ENCODE measurements at regions of chr3 and their contacts with region 1.

Region 1: DNA sequence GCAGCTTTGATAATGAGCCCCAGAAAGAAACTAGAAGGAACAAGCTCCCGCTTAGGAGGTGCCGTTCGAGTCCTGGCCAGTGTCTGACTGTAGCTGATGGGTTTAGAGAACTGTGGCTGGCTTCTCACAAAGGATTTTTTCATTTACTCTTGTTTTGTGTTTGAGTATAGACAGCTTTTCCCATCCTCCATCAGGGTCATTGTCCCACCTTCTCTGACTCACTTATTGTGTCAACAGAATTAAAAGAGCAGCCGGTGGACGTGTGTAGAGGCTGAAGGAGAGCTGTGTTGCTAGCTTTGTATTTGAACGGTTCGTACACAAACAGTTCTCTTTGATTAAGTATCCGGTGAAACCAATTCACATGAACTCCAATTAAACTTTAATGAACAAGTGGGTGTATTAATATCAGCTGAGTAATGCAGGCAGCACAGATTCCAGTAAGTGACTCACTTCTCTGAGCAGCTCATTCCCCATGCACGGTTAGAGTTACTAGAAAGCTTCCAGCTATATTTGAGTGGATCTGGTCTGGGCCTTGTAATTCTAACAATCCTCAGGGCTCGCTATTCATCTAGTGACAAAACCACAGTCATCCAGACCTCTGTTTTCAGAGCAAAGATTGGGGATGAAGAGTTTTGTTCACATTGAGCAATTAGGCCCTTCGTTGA is 141.0 kb downstream of the LPP start:
- DNase-seq: peak; percentile 29
- ATAC-seq: peak; percentile 37
- H3K4me3 Mint-ChIP-seq: no peak overlapping the region
- H3K27ac Mint-ChIP-seq: peak overlapping the region; percentile 69
- H3K4me1 Mint-ChIP-seq: peaks cover 74% of the 10 kb centered on the region
- H3K27me3 Mint-ChIP-seq: no peaks in the 10 kb centered on the region

Region 2: GRCh38 chr3:187802928-187803259 is 492.1 kb before region 1 on chr3:
- CTCF ChIA-PET with region 1: interaction called, 3 read pairs
- POLR2A ChIA-PET with region 1: interaction called, 5 read pairs
- intact Hi-C with region 1: loop called in 1 of 2 experiments (anchors 1 kb)
- DNase-seq: peak; percentile 86
- ATAC-seq: peak; percentile 60
- H3K4me3 Mint-ChIP-seq: peak overlapping the region; percentile 34
- H3K27ac Mint-ChIP-seq: peak overlapping the region; percentile 81
- H3K4me1 Mint-ChIP-seq: peaks cover 93% of the 10 kb centered on the region
- H3K27me3 Mint-ChIP-seq: no peaks in the 10 kb centered on the region

Region 3: DNA sequence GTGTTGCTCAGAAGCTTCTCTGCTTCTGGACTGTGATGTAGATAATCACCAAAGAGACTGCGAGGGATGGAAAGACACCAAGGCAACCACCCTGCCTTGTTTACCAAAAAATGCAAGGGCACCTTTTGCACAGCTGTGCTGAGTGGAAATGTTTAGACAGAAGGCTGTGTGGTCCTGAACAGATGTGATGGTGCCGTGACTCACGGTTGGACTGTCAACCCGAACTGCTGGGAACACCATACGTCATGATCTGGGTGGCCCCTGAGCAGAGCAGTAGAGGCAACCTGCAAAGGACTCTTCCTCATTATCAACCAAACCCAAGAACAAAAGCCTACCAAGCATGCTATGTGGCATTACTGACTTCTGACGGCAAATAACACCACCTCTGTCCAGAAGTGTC is 202.3 kb before region 1 on chr3:
- CTCF ChIA-PET with region 1: no interaction called
- POLR2A ChIA-PET with region 1: no interaction called
- intact Hi-C with region 1: no loop called
- DNase-seq: peak; percentile 80
- ATAC-seq: peak; percentile 97
- H3K4me3 Mint-ChIP-seq: no peak overlapping the region
- H3K27ac Mint-ChIP-seq: no peak overlapping the region
- H3K4me1 Mint-ChIP-seq: peaks cover 7% of the 10 kb centered on the region
- H3K27me3 Mint-ChIP-seq: no peaks in the 10 kb centered on the region

Region 4: GRCh38 chr3:188170461-188171459 is 124.2 kb before region 1 on chr3:
- CTCF ChIA-PET with region 1: no interaction called
- POLR2A ChIA-PET with region 1: no interaction called
- intact Hi-C with region 1: loop called in 1 of 2 experiments (anchors 5 kb)
- DNase-seq: peak; percentile 82
- ATAC-seq: peak; percentile 91
- H3K4me3 Mint-ChIP-seq: peak overlapping the region; percentile 20
- H3K27ac Mint-ChIP-seq: peak overlapping the region; percentile 88
- H3K4me1 Mint-ChIP-seq: peaks cover 59% of the 10 kb centered on the region
- H3K27me3 Mint-ChIP-seq: no peaks in the 10 kb centered on the region

Region 5: DNA sequence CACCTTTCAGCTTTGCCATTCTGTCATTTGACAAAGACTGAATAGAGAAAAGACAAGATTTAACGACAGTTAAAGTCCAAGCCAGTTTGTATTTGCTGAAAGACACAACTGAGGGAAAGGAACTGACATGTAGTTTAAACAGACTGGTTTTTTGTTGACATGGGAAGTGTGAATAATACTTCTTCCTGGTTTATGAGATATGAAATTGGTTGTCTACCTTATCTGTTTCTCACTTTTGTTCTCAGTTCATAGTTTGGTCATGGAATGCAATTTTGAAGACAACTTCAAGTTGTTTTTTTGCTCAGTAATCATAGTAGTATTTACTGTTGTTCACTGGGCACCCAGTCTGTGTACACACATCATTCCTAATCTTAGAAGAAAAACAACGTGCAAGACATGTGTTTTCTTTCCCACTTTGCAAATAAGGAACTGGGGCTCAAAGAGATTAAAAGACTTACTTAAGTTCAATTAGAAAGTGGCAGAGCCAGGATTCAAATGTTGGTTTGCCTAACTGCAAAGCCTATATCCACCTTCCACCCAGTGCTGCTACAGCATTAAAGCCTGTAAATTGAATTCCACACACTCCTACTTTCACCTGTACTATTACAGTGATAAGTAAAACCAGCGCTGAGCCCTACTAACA is 37.5 kb before region 1 on chr3:
- CTCF ChIA-PET with region 1: no interaction called
- POLR2A ChIA-PET with region 1: interaction called, 5 read pairs
- intact Hi-C with region 1: loop called in 1 of 2 experiments (anchors 2 kb)
- DNase-seq: no peak
- ATAC-seq: peak; percentile 12
- H3K4me3 Mint-ChIP-seq: no peak overlapping the region
- H3K27ac Mint-ChIP-seq: peak overlapping the region; percentile 62
- H3K4me1 Mint-ChIP-seq: peaks cover 46% of the 10 kb centered on the region
- H3K27me3 Mint-ChIP-seq: no peaks in the 10 kb centered on the region

Region 6: DNA sequence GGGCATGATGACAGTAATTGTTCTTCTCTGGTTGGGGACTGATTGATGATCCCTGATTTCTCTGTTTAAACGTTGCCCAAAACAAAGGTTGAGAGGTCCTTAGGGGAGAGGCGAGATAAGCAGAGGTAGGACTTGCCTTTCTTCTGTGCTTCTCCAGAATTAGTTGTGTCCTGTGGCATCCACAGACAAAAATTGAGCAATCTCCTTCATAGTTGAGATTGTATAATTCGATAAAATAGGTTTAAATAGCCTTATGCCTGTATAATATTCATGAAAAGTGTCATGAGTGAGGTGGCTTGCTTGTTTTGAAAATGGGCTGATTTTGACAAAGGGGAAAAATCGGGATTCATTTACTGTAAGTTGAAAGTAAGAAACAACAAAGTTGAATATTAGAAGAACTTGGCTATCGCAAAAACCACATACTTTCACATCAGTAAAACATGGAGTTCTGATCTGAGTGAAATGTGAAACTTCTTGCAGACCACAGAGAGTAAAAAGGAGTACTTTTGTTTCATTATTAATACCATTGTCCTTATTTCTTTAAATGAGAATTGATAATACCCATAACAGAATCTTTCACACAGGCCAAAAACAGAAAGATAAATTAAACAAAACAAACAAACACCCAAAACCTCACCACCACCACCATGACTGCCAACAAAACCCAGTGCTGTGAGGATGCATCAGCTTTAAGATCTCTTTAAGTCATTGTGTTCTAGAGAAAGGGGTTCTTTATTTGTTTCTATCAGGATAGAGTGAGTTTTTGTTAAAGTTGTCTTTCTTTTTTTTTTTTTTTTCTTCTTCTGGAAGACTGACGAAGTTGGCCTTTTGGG is 14.7 kb after region 1 on chr3:
- CTCF ChIA-PET with region 1: interaction called, 7 read pairs
- POLR2A ChIA-PET with region 1: interaction called, 4 read pairs
- intact Hi-C with region 1: loop called (anchors 1 kb)
- DNase-seq: peak; percentile 50
- ATAC-seq: peak; percentile 85
- H3K4me3 Mint-ChIP-seq: peak overlapping the region; percentile 9
- H3K27ac Mint-ChIP-seq: peak overlapping the region; percentile 80
- H3K4me1 Mint-ChIP-seq: peaks cover 26% of the 10 kb centered on the region
- H3K27me3 Mint-ChIP-seq: no peaks in the 10 kb centered on the region

Region 7: DNA sequence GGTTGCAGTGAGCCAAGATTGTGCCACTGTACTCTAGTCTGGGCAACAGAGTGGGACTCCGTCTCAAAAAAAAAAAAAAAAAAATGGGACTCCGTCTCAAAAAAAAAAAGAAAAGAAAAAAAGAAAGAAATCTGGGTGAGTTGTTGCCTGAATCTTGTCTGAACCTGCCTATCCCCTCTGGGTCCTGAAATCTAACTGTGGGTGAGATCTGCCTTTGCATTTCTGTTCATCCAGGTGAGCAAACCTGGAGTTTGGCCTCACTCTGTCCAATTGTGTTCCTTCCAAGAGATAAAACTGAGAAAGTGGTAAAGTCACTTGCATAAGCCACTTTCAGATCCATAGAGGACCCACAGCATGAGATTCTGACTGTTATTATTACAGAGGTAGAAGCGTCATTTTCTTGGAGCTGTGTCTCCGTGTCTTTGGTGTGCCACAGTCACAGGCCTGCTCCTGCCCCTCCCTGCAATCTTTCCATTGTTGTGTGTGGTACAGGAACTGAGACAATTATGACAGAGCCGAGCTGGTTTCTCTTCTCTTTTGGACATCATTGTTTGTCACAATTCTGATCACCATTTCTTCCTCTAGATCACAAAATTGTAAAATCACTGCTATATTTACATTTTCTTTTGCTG is 94.9 kb after region 1 on chr3:
- CTCF ChIA-PET with region 1: no interaction called
- POLR2A ChIA-PET with region 1: no interaction called
- intact Hi-C with region 1: loop called in 1 of 2 experiments (anchors 1 kb)
- DNase-seq: peak; percentile 81
- ATAC-seq: peak; percentile 92
- H3K4me3 Mint-ChIP-seq: peak overlapping the region; percentile 22
- H3K27ac Mint-ChIP-seq: peak overlapping the region; percentile 78
- H3K4me1 Mint-ChIP-seq: peaks cover 41% of the 10 kb centered on the region
- H3K27me3 Mint-ChIP-seq: no peaks in the 10 kb centered on the region